ENCODE measurements at regions of chr11 and their contacts with region 1.

Region 1: GRCh38 chr11:87589082-87589481 is 551.3 kb downstream of the TMEM135 start:
- DNase-seq: no peak
- H3K4me3 ChIP-seq: no peak overlapping the region
- H3K27ac ChIP-seq: no peak overlapping the region
- H3K4me1 ChIP-seq: peaks cover 6% of the 10 kb centered on the region
- H3K27me3 ChIP-seq: no peaks in the 10 kb centered on the region
- CTCF ChIP-seq: no peak

Region 2: GRCh38 chr11:87281496-87281895 is 307.6 kb before region 1 on chr11:
- CTCF ChIA-PET with region 1: no interaction called
- dilution Hi-C with region 1: no loop called
- in situ Hi-C with region 1: no loop called
- intact Hi-C with region 1: no loop called
- DNase-seq: peak; percentile 28
- H3K4me3 ChIP-seq: no peak overlapping the region
- H3K27ac ChIP-seq: no peak overlapping the region
- H3K4me1 ChIP-seq: no peaks in the 10 kb centered on the region
- H3K27me3 ChIP-seq: no peaks in the 10 kb centered on the region
- CTCF ChIP-seq: peak in 1 of 2 donors; percentile 20

Region 3: DNA sequence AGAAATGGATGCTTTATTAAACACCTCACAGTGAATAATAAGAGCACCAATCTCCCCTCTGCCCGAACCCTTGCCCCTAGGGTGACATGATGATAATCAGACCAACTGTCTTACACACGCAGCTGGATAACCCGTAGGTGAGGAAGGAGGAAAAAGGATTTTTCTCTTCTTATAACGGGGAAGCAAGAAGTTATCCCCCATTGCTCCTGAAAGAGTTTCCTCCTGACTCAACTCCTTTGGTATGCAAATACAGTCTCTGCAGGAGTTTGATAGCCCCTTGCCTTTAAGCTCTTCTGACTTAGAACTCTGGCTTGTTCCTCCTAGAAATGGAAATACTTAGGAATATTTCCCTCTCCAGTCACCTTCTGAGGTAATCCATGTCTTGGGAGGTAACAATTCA is 95.6 kb before region 1 on chr11:
- CTCF ChIA-PET with region 1: no interaction called
- dilution Hi-C with region 1: loop called (anchors 5 kb)
- in situ Hi-C with region 1: no loop called
- intact Hi-C with region 1: no loop called
- DNase-seq: no peak
- H3K4me3 ChIP-seq: no peak overlapping the region
- H3K27ac ChIP-seq: no peak overlapping the region
- H3K4me1 ChIP-seq: no peaks in the 10 kb centered on the region
- H3K27me3 ChIP-seq: peaks cover 2% of the 10 kb centered on the region
- CTCF ChIP-seq: no peak

Region 4: DNA sequence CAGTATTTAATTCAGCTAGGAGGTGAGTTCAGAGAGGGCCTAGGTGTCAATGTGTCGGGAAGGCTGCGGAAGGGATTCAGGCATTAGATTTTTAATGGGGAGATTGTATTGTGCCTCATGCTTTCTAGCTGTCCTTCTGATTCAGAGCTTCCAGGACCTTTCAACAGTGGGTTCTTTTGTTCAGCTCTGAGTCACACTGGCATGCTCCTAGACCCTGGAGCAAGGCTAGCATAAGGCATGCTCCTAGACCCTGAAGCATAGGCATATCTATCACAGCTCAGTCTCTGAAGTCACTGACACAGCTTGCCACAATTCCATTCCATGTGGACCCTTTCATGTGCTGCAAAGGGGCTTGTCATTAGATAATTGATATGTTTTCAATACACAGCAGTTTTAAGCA is 189.3 kb after region 1 on chr11:
- CTCF ChIA-PET with region 1: no interaction called
- dilution Hi-C with region 1: no loop called
- in situ Hi-C with region 1: no loop called
- intact Hi-C with region 1: no loop called
- DNase-seq: peak; percentile 86
- H3K4me3 ChIP-seq: no peak overlapping the region
- H3K27ac ChIP-seq: no peak overlapping the region
- H3K4me1 ChIP-seq: peaks cover 7% of the 10 kb centered on the region
- H3K27me3 ChIP-seq: no peaks in the 10 kb centered on the region
- CTCF ChIP-seq: no peak

Measured in mammary epithelial cell (primary cell).